Panc1 (cell line): ENCODE measurements at regions of chr9 and their contacts with region 1.

Region 1: DNA sequence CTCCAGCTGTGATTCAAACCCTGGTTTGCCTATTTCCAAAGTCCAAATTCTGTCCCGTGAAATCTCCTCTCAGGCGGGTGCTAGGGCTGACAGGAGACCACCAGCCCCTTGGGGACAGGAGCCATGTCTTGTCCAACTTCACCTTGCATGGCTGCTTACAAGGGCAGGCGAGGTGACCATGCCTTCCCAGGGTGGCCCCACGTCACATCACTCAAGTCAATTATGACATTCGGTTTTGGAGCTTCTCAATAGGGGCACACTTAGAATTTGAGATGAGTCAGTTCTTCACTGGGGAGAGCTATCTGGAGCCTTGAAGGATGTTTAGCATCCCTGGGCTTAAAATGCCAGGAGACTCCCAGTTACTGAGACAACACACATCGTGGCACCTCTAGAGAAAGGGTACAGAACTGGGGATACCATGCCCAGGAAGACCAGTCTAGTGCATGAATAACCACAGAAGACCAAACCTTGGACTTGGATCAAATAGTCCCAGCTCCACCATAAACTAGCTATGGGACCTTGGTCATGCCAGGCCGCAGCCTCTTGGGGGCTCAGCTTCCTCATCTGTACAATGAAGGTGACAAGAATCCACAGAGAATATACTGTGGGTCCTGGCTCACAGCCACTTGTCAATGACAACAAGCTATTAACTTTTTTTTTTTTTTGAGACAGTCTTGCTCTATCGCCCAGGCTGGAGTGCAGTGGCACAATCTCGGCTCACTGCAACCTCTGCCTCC is 4.1 kb downstream of the KYAT1 start:
- DNase-seq: no peak
- ATAC-seq: no peak
- H3K4me3 ChIP-seq: no peak overlapping the region
- H3K27ac ChIP-seq: no peak overlapping the region
- H3K4me1 ChIP-seq: peaks cover 8% of the 10 kb centered on the region
- H3K27me3 ChIP-seq: no peaks in the 10 kb centered on the region
- CTCF ChIP-seq: no peak

Region 2: GRCh38 chr9:128835246-128836210 is 42.1 kb before region 1 on chr9:
- CTCF ChIA-PET with region 1: interaction called, 15 read pairs
- POLR2A ChIA-PET with region 1: no interaction called
- in situ Hi-C with region 1: no loop called
- intact Hi-C with region 1: no loop called
- DNase-seq: no peak
- ATAC-seq: peak; percentile 20; the same call in 1 of the 2 replicates
- H3K4me3 ChIP-seq: no peak overlapping the region
- H3K27ac ChIP-seq: no peak overlapping the region
- H3K4me1 ChIP-seq: no peaks in the 10 kb centered on the region
- H3K27me3 ChIP-seq: no peaks in the 10 kb centered on the region
- CTCF ChIP-seq: no peak

Region 3: GRCh38 chr9:129177791-129178559 is 300.3 kb after region 1 on chr9 and contains the start of gene IER5L:
- CTCF ChIA-PET with region 1: no interaction called
- POLR2A ChIA-PET with region 1: no interaction called
- in situ Hi-C with region 1: no loop called
- intact Hi-C with region 1: no loop called
- DNase-seq: no peak
- ATAC-seq: peak; percentile 84
- H3K4me3 ChIP-seq: peak within 1 kb of the TSS; percentile 74 to 81
- H3K27ac ChIP-seq: peak within 1 kb of the TSS; percentile 95; the same call in 1 of the 2 replicates
- H3K4me1 ChIP-seq: peaks cover 17% of the 10 kb centered on the region
- H3K27me3 ChIP-seq: no peaks in the 10 kb centered on the region
- CTCF ChIP-seq: peak; percentile 0; the same call in 1 of the 2 replicates
- total RNA-seq, gene IER5L: 44.6 TPM